Activated CD4-positive, alpha-beta memory T cell treated with anti-CD3 and anti-CD28 coated beads, Interleukin-2, amount 10 ng/mL, durations not matched to agents 7 days and 5 days (primary cell): ENCODE measurements at regions of chr16 and their contacts with region 1.

Region 1: DNA sequence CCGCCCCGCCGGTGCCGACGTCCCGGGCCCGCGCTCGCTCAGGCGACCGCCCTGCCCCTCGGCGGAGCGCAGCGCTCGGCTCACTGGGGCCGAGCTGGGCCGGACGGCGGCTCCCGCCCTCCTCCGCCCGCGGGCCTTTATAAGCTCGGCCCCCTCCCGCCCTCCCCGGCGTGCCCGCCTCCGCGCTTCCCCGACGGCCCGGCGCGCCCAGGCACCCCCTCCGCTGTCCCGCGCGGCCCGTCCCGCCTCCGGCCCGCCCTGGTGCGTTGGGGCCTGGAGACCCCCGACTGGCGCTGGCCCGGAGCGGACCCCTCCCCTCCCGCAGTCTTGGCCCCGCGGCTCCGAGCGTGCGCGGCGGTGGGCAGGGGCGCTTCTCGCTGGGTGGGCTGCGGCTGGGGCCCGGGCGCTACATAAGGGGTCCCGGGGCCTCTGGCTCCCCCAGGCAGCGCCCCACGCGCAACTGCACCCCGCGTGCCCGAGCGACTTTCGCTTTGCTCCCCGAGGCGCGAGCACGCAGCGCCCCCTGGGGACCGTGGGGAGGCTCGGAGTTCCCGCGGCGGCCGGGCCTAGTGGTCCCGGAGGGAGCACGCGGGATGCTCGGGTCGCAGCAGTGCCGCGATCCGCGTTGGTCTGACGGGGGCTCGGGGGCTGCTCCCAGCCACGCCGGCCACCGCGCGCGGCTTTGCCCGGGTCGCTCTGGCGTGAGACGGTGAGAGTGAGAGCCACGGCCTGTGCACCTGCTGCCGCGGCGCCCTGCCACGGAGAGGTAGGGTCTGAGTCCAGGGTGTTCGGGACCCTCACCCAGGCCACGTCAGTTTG is at the start of gene PIEZO1:
- DNase-seq: peak; percentile 81
- H3K4me3 Mint-ChIP-seq: peak within 1 kb of the TSS; percentile 94
- H3K27ac Mint-ChIP-seq: peak within 1 kb of the TSS; percentile 97
- H3K4me1 Mint-ChIP-seq: peaks cover 43% of the 10 kb centered on the region
- H3K27me3 Mint-ChIP-seq: no peaks in the 10 kb centered on the region
- total RNA-seq, gene PIEZO1: 308 to 323 TPM

Region 2: DNA sequence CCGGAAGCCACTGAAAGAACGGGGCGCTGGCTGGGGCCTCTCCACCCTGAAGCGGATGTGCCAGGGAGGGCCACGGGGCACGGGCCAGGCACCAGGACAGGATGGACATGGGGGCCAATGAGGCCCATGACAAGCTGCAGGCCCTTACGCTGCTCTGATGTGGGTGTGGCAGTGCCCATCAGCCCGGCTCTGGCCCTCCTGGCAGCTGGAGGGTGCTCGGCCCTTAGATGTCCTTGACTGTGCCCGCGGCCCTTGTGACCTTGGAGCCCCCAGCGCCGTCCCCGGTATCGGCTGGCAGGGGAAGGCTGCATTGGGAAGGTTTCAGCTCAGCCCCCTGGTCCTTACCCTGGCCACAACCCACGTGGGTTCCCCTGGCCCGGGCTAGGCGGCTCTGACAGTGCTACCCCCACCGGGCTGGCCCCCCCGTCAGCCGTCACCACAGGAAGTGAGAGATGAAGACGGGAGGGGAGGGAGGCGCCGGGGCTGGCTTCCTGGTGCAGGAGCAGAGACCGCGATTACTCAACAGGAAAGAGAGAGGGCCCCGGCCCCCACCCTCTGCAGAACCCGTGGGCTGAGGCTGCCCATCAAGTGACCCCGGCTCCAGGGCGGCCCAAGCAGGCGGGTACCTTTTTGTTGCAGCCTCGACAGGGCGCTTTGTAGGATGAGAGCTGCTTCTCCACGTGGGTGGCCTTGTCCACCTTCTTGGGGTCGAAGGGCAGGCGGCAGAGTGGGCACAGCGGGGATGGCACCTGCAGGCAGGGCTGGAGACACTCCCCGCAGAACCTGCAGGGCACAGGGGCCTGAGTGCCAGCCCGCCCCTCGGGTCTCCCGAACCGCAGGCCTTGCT is 84.5 kb before region 1 on chr16:
- CTCF ChIA-PET with region 1: interaction called, 9 read pairs
- POLR2A ChIA-PET with region 1: interaction called, 91 read pairs
- DNase-seq: peak; percentile 98
- H3K4me3 Mint-ChIP-seq: peak overlapping the region; percentile 95
- H3K27ac Mint-ChIP-seq: peak overlapping the region; percentile 98
- H3K4me1 Mint-ChIP-seq: peaks cover 63% of the 10 kb centered on the region
- H3K27me3 Mint-ChIP-seq: no peaks in the 10 kb centered on the region

Region 3: DNA sequence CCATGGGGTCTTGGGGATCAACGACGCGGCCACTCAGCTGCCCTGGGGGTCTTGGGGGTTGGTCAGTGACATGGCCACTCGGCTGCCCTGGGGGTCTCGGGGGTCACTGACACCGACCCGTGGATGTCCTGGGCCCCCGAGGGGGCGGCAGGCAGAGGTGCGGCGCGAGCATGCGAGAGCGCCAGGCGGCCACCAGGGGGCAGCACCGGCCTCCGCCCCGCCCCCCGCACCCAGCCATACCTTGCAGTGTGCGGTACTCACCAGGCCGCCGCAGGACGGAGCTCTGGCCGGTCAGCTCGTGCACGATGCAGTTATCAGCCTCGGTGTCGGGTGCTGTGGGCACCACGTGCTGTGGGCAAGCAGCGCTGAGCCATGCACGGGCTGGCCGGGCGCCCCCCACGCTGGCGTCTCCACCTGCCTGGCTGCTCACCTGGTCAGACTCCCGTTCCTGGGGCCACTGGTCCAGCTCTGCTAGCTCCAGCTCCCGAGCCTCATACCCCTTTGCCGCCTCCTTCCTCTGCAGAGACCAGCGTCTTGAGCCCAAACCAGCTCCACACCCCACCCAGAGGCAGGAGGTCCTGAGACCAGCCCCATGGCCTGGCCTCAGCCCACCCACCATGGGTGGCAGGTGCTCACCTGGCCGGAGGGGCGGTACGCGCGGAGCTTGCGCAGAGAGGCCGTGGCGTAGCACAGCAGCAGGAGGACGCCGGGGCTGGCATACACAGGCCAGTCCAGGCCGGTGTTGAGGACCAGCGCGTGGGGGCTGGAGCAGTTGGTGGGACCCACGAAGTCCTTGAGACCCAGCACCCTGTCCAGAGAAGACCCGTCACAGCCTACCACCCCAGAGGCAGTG is 47.8 kb before region 1 on chr16:
- CTCF ChIA-PET with region 1: interaction called, 62 read pairs
- POLR2A ChIA-PET with region 1: interaction called, 10 read pairs
- DNase-seq: peak; percentile 77
- H3K4me3 Mint-ChIP-seq: no peak overlapping the region
- H3K27ac Mint-ChIP-seq: no peak overlapping the region
- H3K4me1 Mint-ChIP-seq: peaks cover 1% of the 10 kb centered on the region
- H3K27me3 Mint-ChIP-seq: no peaks in the 10 kb centered on the region

Region 4: GRCh38 chr16:88759245-88759975 is 25.9 kb before region 1 on chr16:
- CTCF ChIA-PET with region 1: interaction called, 7 read pairs
- POLR2A ChIA-PET with region 1: interaction called, 18 read pairs
- DNase-seq: peak; percentile 73
- H3K4me3 Mint-ChIP-seq: peak overlapping the region; percentile 32
- H3K27ac Mint-ChIP-seq: peak overlapping the region; percentile 77
- H3K4me1 Mint-ChIP-seq: peaks cover 34% of the 10 kb centered on the region
- H3K27me3 Mint-ChIP-seq: no peaks in the 10 kb centered on the region

Region 5: GRCh38 chr16:88811769-88812512 is 26.6 kb after region 1 on chr16 and contains the start of gene APRT:
- CTCF ChIA-PET with region 1: interaction called, 19 read pairs
- POLR2A ChIA-PET with region 1: interaction called, 249 read pairs
- DNase-seq: peak; percentile 97
- H3K4me3 Mint-ChIP-seq: peak within 1 kb of the TSS; percentile 92
- H3K27ac Mint-ChIP-seq: peak within 1 kb of the TSS; percentile 99
- H3K4me1 Mint-ChIP-seq: peaks cover 33% of the 10 kb centered on the region
- H3K27me3 Mint-ChIP-seq: no peaks in the 10 kb centered on the region
- total RNA-seq, gene APRT: 129 to 136 TPM